ENCODE measurements at regions of chr1 and their contacts with region 1.

Region 1: GRCh38 chr1:59947047-59947938 is 20.7 kb upstream of the CYP2J2 start:
- DNase-seq: peak; percentile 39
- H3K4me3 ChIP-seq: no peak overlapping the region
- H3K27ac ChIP-seq: no peak overlapping the region
- H3K4me1 ChIP-seq: no peaks in the 10 kb centered on the region
- H3K27me3 ChIP-seq: no peaks in the 10 kb centered on the region
- CTCF ChIP-seq: peak; percentile 76 to 85 (median 81)
- POLR2A ChIP-seq: no peak

Region 2: DNA sequence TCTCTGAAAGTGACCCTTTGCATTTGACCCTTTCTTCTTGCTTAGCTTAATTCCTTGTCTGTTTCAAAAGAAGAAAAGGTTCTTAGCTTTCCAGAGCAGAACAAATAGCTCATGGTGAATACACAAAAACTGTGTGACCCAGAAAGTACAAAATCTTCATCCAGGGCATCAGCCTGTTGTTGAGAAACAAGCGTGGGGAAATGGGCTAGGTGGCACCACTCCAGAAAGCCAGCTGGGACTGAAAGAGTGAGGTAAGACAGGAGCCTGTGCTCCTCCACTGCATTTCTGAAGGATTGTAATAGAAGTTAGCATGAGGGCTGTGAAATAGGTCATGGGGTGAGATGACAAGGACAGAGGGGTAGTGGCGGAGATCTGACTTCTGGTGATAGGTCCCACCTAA is 66.6 kb before region 1 on chr1:
- intact Hi-C with region 1: loop called (anchors 2 kb)
- DNase-seq: no peak
- H3K4me3 ChIP-seq: no peak overlapping the region
- H3K27ac ChIP-seq: no peak overlapping the region
- H3K4me1 ChIP-seq: no peaks in the 10 kb centered on the region
- H3K27me3 ChIP-seq: no peaks in the 10 kb centered on the region
- CTCF ChIP-seq: no peak
- POLR2A ChIP-seq: no peak

Region 3: DNA sequence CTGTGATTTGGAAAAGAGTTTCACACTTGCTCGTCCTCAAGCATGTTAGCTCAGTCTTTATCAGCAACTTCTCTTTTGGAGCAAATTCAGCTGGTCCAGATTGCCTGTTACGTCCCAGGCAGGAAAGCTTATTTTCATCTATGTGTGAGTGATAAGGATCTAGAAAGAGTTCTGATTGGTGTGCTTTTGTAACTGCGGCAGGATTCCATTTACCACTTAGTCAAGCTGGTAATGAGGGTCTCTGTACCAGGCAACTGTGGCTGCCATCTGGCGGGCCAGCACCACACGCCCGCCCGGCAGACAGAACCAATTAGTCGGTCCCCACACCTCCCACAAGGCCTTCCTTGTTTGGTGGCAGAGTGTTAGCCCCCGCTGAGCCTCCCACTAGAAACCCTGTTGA is 105.3 kb after region 1 on chr1:
- intact Hi-C with region 1: no loop called
- DNase-seq: no peak
- H3K4me3 ChIP-seq: no peak overlapping the region
- H3K27ac ChIP-seq: no peak overlapping the region
- H3K4me1 ChIP-seq: no peaks in the 10 kb centered on the region
- H3K27me3 ChIP-seq: no peaks in the 10 kb centered on the region
- CTCF ChIP-seq: no peak
- POLR2A ChIP-seq: no peak

Measured in prostate gland (tissue), 2 donors.